OCI-LY7 (cell line): ENCODE measurements at regions of chr2 and their contacts with region 1.

Region 1: GRCh38 chr2:225223301-225223700 is 176.2 kb upstream of the NYAP2 start:
- DNase-seq: no peak
- H3K4me3 ChIP-seq: no peak overlapping the region
- H3K27ac ChIP-seq: no peak overlapping the region
- H3K4me1 ChIP-seq: no peaks in the 10 kb centered on the region
- CTCF ChIP-seq: no peak

Region 2: DNA sequence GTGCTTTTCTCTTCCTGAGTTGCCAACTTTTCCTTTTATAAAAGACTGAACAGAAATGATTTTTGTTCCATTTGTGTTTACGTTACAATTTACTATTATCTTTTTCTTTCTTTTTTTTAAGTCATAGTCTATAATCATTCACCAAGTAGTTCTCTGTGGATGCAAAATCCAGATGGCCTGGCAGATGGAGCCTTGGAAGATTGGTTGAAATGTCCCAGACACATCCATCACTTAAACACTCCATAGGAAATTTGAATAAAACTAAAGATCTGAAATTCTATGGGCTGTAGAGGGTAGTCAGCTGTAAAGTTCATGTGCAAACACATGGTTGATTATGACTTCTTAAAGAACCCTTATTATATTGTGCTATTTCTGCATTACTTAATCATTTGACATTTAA is 16.3 kb before region 1 on chr2:
- CTCF ChIA-PET with region 1: no interaction called
- POLR2A ChIA-PET with region 1: interaction called, 11 read pairs
- intact Hi-C with region 1: no loop called
- DNase-seq: no peak
- H3K4me3 ChIP-seq: no peak overlapping the region
- H3K27ac ChIP-seq: no peak overlapping the region
- H3K4me1 ChIP-seq: no peaks in the 10 kb centered on the region
- CTCF ChIP-seq: no peak